ENCODE measurements at regions of chr14 and their contacts with region 1.

Region 1: DNA sequence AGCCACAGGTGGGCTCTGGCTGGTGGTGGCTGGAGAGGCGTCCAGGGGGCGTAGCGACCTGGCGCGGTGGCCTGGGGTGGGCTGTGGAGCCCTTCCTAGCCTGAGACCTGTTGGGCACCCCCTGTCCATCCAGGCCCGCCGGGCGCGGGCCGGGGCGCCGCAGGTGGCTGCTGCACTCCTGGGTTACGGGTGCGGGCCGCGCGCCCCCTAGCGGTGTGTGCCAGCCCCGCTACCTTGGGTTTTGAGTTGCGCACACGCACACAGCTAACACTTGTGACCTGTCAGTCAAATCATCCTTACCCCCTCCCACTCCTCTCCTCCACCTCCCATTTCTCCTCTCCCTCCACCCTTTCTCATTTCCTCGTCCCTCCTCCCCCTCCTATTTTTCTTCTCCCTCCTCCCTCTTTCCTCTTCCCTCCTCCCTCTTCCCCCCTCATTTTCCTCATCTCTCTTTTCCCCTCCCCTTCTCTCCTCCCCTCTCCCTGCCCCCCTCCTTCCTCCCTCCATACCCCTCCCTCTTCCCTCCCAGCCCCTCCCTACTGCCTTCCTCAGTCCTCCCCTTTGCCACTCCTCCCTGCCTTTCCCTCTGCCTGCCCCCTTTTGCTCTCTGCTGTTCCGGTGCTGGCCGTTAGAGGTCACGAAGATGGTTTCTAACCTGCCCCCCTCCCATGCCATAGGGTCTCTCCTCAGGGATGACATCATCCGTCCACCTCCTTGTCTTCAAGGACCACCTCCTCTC is 2.3 kb downstream of the MEG3 start:
- DNase-seq: peak; percentile 20
- H3K4me3 ChIP-seq: peak overlapping the region; percentile 32 to 40 (median 32)
- H3K27ac ChIP-seq: no peak overlapping the region
- H3K4me1 ChIP-seq: no peaks in the 10 kb centered on the region
- H3K27me3 ChIP-seq: peaks cover 6% of the 10 kb centered on the region
- CTCF ChIP-seq: peak; percentile 46 to 69

Region 2: GRCh38 chr14:100654814-100655740 is 173.1 kb before region 1 on chr14:
- CTCF ChIA-PET with region 1: no interaction called
- dilution Hi-C with region 1: loop called (anchors 5 kb)
- in situ Hi-C with region 1: no loop called
- intact Hi-C with region 1: no loop called
- DNase-seq: peak; percentile 12
- H3K4me3 ChIP-seq: no peak overlapping the region
- H3K27ac ChIP-seq: no peak overlapping the region
- H3K4me1 ChIP-seq: peaks cover 5% of the 10 kb centered on the region
- H3K27me3 ChIP-seq: no peaks in the 10 kb centered on the region
- CTCF ChIP-seq: peak; percentile 47 to 86

Region 3: GRCh38 chr14:100662879-100663760 is 165.1 kb before region 1 on chr14:
- CTCF ChIA-PET with region 1: no interaction called
- dilution Hi-C with region 1: no loop called
- in situ Hi-C with region 1: no loop called
- intact Hi-C with region 1: loop called (anchors 1 kb)
- DNase-seq: peak; percentile 20
- H3K4me3 ChIP-seq: no peak overlapping the region
- H3K27ac ChIP-seq: no peak overlapping the region
- H3K4me1 ChIP-seq: no peaks in the 10 kb centered on the region
- H3K27me3 ChIP-seq: no peaks in the 10 kb centered on the region
- CTCF ChIP-seq: peak; percentile 86 to 89

Region 4: DNA sequence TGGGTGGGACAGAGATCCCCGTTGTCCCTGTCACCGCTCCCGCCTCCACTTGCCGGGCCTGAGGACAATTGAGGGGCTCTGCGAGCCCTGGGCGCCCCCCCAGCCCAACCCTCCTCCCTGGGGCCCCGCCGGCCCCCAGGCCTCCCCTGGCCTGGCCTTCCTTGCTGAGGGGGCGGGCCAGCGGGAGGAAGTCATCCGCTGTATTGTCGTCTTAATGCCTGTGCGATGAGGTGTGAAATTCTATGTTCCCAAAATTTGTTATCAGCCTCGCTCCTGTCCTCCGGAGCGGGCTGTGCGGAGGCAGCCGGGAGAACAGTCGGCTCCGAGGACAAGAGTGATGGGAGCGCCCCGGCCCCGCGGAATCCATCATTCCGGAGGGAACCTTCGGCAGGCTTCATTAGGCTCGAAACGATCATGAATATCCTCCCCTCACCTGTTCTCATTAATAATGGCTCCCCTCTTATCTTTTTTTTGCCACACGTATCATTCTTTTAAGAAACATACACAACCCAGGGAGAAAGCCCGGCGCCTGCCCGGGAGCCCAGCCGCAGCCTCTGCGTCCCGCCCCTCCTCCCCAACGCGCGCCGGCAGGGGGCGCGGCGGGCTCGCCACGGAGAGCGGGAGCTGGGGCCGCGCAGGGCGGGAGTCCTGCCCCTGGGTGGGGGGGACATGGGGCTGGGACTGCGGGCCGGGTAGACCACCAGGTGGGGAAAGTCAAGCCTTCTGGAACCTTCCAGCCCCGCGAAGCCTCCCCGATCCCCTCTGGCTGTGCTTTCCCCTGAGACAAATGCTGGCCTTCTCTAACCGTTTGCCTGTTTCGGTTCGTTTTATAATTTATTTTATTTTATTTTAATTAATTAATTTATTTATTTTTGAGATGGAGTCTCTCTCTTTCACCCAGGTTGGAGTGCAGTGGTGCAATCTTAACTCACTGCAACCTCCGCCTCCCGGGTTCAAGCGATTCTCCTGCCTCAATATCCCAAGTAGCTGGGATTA is 118.6 kb before region 1 on chr14:
- CTCF ChIA-PET with region 1: no interaction called
- dilution Hi-C with region 1: no loop called
- in situ Hi-C with region 1: no loop called
- intact Hi-C with region 1: loop called (anchors 1 kb)
- DNase-seq: no peak
- H3K4me3 ChIP-seq: no peak overlapping the region
- H3K27ac ChIP-seq: no peak overlapping the region
- H3K4me1 ChIP-seq: peaks cover 13% of the 10 kb centered on the region
- H3K27me3 ChIP-seq: no peaks in the 10 kb centered on the region
- CTCF ChIP-seq: peak in 1 of 2 donors; percentile 28

Region 5: GRCh38 chr14:100747021-100747586 is 81.1 kb before region 1 on chr14:
- CTCF ChIA-PET with region 1: no interaction called
- dilution Hi-C with region 1: no loop called
- in situ Hi-C with region 1: no loop called
- intact Hi-C with region 1: loop called (anchors 2 kb)
- DNase-seq: peak; percentile 95
- H3K4me3 ChIP-seq: no peak overlapping the region
- H3K27ac ChIP-seq: peak overlapping the region; percentile 59
- H3K4me1 ChIP-seq: peaks cover 5% of the 10 kb centered on the region
- H3K27me3 ChIP-seq: no peaks in the 10 kb centered on the region
- CTCF ChIP-seq: no peak

Measured in mammary epithelial cell (primary cell).